Activated CD8-positive, alpha-beta T cell treated with anti-CD3 and anti-CD28 coated beads, Interleukin-2, amount 10 ng/mL, durations not matched to agents 7 days and 5 days (primary cell): ENCODE measurements at regions of chr1 and their contacts with region 1.

Region 1: GRCh38 chr1:110619412-110620249 is 13.5 kb upstream of the KCNA2 start:
- DNase-seq: peak; percentile 93
- ATAC-seq: peak; percentile 90
- H3K4me3 Mint-ChIP-seq: peak overlapping the region; percentile 82
- H3K27ac Mint-ChIP-seq: peak overlapping the region; percentile 93
- H3K4me1 Mint-ChIP-seq: peaks cover 50% of the 10 kb centered on the region
- H3K27me3 Mint-ChIP-seq: peaks cover under 1% of the 10 kb centered on the region

Region 2: GRCh38 chr1:110425612-110426152 is 193.9 kb before region 1 on chr1:
- CTCF ChIA-PET with region 1: no interaction called
- POLR2A ChIA-PET with region 1: no interaction called
- DNase-seq: no peak
- ATAC-seq: no peak
- H3K4me3 Mint-ChIP-seq: no peak overlapping the region
- H3K27ac Mint-ChIP-seq: no peak overlapping the region
- H3K4me1 Mint-ChIP-seq: peaks cover 11% of the 10 kb centered on the region
- H3K27me3 Mint-ChIP-seq: peaks cover 14% of the 10 kb centered on the region

Region 3: GRCh38 chr1:110630839-110631663 is 11.4 kb after region 1 on chr1:
- CTCF ChIA-PET with region 1: interaction called, 38 read pairs
- POLR2A ChIA-PET with region 1: interaction called, 10 read pairs
- DNase-seq: peak; percentile 94
- ATAC-seq: peak; percentile 84
- H3K4me3 Mint-ChIP-seq: no peak overlapping the region
- H3K27ac Mint-ChIP-seq: no peak overlapping the region
- H3K4me1 Mint-ChIP-seq: peaks cover 32% of the 10 kb centered on the region
- H3K27me3 Mint-ChIP-seq: no peaks in the 10 kb centered on the region

Region 4: DNA sequence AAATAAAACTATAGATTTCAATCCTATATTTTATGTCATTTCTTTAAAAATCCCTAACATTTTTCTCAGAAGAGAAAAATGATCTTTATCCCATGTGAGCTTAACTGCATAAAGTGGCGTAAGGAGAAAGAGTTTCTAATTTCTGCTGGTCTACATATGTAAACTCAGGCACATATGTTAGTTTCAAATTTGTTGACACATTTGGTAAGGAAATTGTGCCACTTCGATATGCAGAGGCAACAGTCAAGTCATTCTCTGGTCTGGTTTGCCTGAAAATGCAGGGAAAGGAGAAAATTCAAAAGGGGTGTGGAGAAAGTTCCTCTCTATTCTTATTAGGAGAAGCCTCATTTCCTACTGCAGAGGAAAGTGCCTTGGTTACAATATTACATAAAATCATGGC is 43.6 kb after region 1 on chr1:
- CTCF ChIA-PET with region 1: interaction called, 31 read pairs
- POLR2A ChIA-PET with region 1: interaction called, 8 read pairs
- DNase-seq: no peak
- ATAC-seq: no peak
- H3K4me3 Mint-ChIP-seq: no peak overlapping the region
- H3K27ac Mint-ChIP-seq: no peak overlapping the region
- H3K4me1 Mint-ChIP-seq: peaks cover 22% of the 10 kb centered on the region
- H3K27me3 Mint-ChIP-seq: no peaks in the 10 kb centered on the region

Region 5: GRCh38 chr1:110686188-110686587 is 66.6 kb after region 1 on chr1:
- CTCF ChIA-PET with region 1: interaction called, 10 read pairs
- POLR2A ChIA-PET with region 1: no interaction called
- DNase-seq: peak; percentile 33
- ATAC-seq: peak; percentile 69
- H3K4me3 Mint-ChIP-seq: no peak overlapping the region
- H3K27ac Mint-ChIP-seq: no peak overlapping the region
- H3K4me1 Mint-ChIP-seq: peaks cover 6% of the 10 kb centered on the region
- H3K27me3 Mint-ChIP-seq: peaks cover 4% of the 10 kb centered on the region

Region 6: DNA sequence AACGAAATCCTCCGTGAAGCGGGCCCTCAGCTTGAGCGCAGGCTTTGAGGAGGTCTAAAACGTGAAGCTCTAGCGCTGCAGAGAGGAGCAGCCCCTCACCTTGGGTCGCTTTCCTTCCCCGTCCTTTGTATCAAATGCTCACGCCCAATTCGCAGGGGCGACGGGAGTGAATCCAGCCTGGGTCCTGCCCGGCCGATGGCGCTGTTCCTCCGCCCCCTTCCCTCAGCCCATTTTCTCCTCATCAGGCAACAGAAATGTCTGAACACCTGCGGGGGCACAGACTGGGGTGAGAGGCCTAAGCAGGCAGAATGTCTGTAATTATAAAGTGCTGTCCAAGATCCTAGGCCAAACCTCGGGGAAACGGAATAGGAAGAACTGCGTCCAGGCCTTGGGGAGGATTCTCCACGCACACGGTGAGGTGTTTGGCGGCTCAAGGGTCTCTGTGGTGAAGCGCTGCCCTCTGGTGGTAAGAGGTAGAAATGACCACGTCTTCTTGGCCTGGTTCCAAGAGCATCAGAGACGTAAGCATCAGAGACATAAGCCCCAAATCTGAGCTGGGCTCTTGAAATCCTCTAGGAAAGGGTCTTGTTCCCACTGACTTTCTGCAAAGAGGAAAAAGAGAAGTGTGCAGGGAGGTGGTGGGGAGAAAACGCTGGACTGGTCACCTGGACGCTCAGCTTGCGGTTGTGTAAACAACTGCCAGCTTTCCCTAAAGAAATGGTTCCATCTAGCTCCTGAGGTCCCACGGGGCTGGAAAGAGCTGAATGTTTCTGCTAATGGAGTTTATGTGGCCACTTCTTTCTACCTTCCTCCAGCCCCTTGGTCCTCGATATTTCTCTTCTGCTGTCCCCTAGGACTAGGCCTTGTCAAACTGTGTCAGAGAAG is 161.2 kb after region 1 on chr1:
- CTCF ChIA-PET with region 1: interaction called, 146 read pairs
- POLR2A ChIA-PET with region 1: interaction called, 11 read pairs
- DNase-seq: peak; percentile 86
- ATAC-seq: peak; percentile 71
- H3K4me3 Mint-ChIP-seq: no peak overlapping the region
- H3K27ac Mint-ChIP-seq: no peak overlapping the region
- H3K4me1 Mint-ChIP-seq: peaks cover 42% of the 10 kb centered on the region
- H3K27me3 Mint-ChIP-seq: peaks cover 7% of the 10 kb centered on the region